A549 (cell line): ENCODE measurements at regions of chr15 and their contacts with region 1.

Region 1: DNA sequence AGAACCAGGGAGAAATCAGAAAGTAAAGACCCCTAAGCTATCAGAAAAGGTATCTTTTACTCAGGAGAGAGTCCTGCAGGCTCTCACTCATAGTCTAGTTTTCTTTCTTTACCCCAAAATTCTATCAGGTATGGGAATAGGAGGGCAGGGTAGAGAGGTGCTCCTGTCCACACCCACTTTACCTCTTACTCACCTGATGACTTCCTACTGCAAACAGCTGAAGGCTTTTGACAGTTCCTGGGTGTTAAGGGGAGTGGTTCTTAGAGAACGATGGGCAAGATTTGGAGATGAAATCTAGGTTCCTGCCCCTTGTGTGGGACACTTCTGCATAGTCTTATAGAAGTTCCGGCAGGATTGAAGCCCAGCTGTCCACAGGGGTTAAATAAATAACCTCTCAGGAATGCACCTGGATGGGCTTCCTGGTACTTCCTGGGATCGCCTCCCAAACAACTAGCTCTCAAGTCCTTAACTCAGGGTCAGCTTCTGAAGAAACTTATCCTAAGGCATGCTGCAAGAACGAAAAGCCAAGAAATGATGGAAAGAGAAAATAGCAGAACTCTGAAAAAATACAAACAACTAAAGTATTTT is 10.8 kb upstream of the TNFAIP8L3 start:
- DNase-seq: no peak
- ATAC-seq: no peak
- H3K4me3 ChIP-seq: no peak overlapping the region
- H3K27ac ChIP-seq: no peak overlapping the region
- H3K4me1 ChIP-seq: no peaks in the 10 kb centered on the region
- CTCF ChIP-seq: no peak
- EP300 ChIP-seq: no peak
- POLR2A ChIP-seq: no peak
- RAD21 ChIP-seq: no peak

Region 2: GRCh38 chr15:51121118-51121517 is 15.6 kb after region 1 on chr15:
- CTCF ChIA-PET with region 1: interaction called, 12 read pairs
- POLR2A ChIA-PET with region 1: no interaction called
- DNase-seq: peak; percentile 71 to 85
- ATAC-seq: peak; percentile 99 to 100
- H3K4me3 ChIP-seq: no peak overlapping the region
- H3K27ac ChIP-seq: peak overlapping the region; percentile 58 to 66; a peak in 5 of 6 replicates
- H3K4me1 ChIP-seq: peaks cover 16% of the 10 kb centered on the region
- CTCF ChIP-seq: no peak
- EP300 ChIP-seq: no peak
- POLR2A ChIP-seq: no peak
- RAD21 ChIP-seq: no peak